ENCODE measurements at regions of chr19 and their contacts with region 1.

Region 1: GRCh38 chr19:52139252-52140031 is at the start of gene ZNF616:
- DNase-seq: peak; percentile 91 to 99 (median 98)
- ATAC-seq: peak; percentile 91 to 94 (median 94)
- H3K4me3 ChIP-seq: peak within 1 kb of the TSS; percentile 79 to 96 (median 83)
- H3K27ac ChIP-seq: peak within 1 kb of the TSS; percentile 82 to 88 (median 84)
- H3K4me1 ChIP-seq: peaks cover 0 to 10% (median 7%) of the 10 kb centered on the region in 4 donors
- H3K27me3 ChIP-seq: no peaks in the 10 kb centered on the region
- CTCF ChIP-seq: peak; percentile 74 to 80 (median 78)
- POLR2A ChIP-seq: peak; percentile 57
- total RNA-seq, gene ZNF616: 1.9 to 6.2 (median 4.2) TPM

Region 2: DNA sequence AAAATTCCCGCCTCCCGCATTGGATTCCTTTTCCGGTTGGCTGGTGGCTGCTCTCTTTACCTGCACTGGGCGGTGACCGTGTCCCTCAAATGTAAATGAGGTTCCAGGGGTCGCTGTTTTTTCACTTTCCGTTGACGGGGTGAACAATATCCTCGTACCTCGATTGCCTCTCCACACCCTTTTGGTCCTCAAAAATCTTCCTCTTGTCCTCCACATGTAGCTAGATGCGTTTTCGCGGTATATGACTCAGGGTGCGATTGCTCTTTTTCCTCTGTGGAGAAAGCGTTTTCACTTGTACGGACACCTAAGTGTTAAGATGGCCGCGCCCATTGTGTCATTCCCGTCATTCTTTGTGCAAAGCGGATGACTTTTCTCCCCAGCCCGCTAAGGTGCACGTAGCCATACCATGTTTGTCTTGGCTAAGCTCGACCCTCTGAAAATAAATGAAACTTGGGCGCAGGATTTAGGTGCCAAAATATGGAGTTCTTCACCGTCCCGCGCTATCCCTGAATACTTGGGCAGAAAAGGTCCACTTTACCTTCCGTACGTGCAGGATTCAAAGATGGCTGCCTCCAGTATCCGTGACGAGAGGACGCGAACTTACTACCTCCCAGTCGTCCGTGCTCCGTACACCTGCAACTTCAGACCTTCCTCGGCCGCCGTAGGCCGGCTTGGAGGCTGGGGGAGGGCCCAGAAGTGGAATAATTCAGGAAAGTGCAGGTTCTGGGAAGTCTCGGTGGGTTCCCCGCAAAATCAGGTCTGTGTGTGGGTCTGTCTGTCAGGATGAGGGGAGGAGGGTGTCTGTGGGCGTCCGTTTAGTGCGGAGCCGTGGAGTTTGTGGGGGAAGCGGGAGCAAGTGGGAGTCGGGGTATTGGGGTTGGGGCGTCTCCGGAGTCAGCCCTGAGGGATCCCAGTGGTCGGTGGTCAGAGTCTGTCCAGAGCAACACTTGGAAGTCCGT is 212.4 kb before region 1 on chr19 and contains the start of gene ZNF613:
- intact Hi-C with region 1: no loop called
- DNase-seq: peak; percentile 88 to 94 (median 93)
- ATAC-seq: peak; percentile 97 to 99 (median 98)
- H3K4me3 ChIP-seq: peak within 1 kb of the TSS; percentile 87 to 92 (median 88)
- H3K27ac ChIP-seq: peak within 1 kb of the TSS; percentile 64 to 84 (median 73)
- H3K4me1 ChIP-seq: peaks cover 0 to 7% (median 0%) of the 10 kb centered on the region in 4 donors
- H3K27me3 ChIP-seq: no peaks in the 10 kb centered on the region
- CTCF ChIP-seq: peak; percentile 5 to 26 (median 20)
- POLR2A ChIP-seq: no peak
- total RNA-seq, gene ZNF613: 0.87 to 2.7 (median 2.2) TPM

Region 3: DNA sequence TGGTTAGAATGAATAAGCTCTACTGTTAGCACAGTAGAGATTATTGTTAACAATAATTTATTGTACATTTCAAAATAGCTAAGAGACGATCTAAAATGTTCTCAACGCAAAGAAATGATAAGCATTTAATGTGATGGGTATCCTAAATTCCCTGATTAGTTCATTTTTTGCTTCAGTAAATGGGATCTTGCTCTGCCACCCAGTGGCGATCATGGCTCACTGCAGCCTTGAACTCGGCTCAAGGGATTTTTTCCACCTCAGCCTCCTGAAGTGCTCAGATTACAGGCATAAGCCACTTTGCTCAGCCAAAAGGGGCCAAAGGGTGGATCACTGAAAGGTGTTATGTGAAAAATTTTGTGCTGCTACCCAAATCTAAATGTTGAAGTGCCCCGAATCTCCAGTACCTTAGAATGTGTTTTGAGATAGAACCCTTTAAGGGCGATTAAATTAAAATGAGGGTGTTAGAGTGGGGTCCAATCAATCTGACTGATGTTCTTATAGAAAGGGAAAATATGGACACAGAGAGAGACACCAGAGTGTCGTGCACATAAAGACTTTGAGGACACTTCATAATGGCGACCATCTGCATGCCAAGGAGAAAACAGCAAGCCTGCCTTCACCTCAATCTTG is 98.4 kb after region 1 on chr19:
- intact Hi-C with region 1: loop called in 1 of 2 experiments (anchors 5 kb)
- DNase-seq: peak in 2 of 3 donors; percentile 32 to 59
- ATAC-seq: peak; percentile 88 to 96 (median 92)
- H3K4me3 ChIP-seq: no peak overlapping the region
- H3K27ac ChIP-seq: no peak overlapping the region
- H3K4me1 ChIP-seq: no peaks in the 10 kb centered on the region
- H3K27me3 ChIP-seq: no peaks in the 10 kb centered on the region
- CTCF ChIP-seq: peak; percentile 80 to 94 (median 90)
- POLR2A ChIP-seq: no peak